ENCODE measurements at regions of chr9 and their contacts with region 1.

Region 1: GRCh38 chr9:72280913-72281500 is 84.0 kb downstream of the ZFAND5 start:
- DNase-seq: peak; percentile 65

Region 2: GRCh38 chr9:72006501-72006900 is 274.5 kb before region 1 on chr9:
- in situ Hi-C with region 1: no loop called
- DNase-seq: no peak

Region 3: DNA sequence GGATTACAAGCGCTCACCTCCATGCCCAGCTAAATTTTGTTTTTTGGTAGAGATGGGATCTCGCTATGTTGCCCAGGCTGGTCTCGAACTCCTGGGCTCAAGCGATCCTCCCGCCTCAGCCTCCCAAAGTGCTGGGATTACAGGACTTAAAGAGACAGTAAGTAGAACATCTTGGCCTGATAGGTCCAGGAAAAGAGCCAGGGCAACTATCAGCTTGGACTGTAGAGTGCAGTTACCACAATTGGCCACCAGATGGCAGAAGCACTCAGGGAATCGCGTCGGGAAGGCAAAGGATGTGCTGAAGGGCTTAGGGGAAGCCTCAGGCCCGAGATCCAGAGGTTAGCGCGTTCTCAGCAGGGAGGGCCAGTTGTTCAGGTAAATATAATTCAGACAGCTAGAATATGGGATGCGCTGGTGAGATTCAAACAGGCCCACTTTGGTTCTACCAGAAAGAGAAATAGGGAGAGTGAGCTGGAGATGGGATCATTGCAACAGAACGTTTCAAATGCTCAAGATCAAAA is 242.1 kb before region 1 on chr9:
- in situ Hi-C with region 1: loop called (anchors 25 kb)
- DNase-seq: peak; percentile 76

Region 4: DNA sequence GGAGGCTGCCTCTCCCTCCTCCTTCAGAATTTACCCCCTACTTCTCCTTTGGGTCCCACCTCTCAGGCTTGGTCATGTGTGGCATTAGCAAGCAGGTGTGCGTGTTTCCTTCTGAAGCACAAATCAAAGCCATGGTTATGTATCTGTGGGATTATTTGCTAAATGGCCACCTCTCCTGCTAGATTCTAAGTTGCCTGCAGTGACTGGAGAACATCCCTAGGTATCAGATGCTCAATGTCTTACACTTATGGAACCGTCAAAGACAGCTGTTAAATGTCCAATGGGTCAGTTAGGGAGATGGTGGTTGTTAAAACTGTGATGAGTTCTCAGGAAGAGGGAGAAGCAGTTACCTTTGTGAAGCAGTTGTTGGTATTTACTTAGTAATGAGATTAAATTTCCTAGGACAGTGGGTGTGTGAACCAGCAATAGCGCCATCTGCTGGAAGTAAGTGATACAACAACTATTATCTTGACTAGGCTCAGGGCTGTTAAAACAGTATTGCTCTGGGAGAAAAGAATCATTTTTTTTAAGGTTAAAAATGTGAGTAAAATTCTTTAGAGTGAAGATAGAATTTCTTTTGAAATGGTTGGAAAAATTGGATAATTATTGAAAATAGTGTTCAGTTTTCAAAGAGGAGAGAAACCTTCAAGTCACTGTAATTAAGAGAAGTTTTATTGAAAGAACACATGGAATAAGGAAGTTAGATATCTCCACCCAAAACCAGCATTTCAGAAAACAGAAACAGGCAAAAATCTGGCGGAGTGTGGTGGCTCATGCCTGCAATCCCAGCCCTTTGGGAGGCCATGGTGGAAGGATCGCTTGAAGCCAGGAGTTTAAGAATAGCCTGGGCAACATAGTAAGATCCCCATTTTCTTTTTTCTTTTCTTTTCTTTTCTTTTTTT is 311.7 kb after region 1 on chr9:
- in situ Hi-C with region 1: loop called (anchors 25 kb)
- DNase-seq: peak; percentile 74

Measured in KBM-7 (cell line).